Endothelial cell of umbilical vein (primary cell): ENCODE measurements at regions of chr7 and their contacts with region 1.

Region 1: GRCh38 chr7:4010061-4010605 is 672.0 kb upstream of the FOXK1 start:
- DNase-seq: no peak
- H3K4me3 ChIP-seq: no peak overlapping the region
- H3K27ac ChIP-seq: no peak overlapping the region
- H3K4me1 ChIP-seq: peaks cover 13% of the 10 kb centered on the region
- H3K27me3 ChIP-seq: no peaks in the 10 kb centered on the region
- CTCF ChIP-seq: no peak
- POLR2A ChIP-seq: no peak

Region 2: GRCh38 chr7:3942816-3943745 is 67.1 kb before region 1 on chr7:
- CTCF ChIA-PET with region 1: no interaction called
- POLR2A ChIA-PET with region 1: no interaction called
- dilution Hi-C with region 1: no loop called
- intact Hi-C with region 1: no loop called
- DNase-seq: no peak
- H3K4me3 ChIP-seq: no peak overlapping the region
- H3K27ac ChIP-seq: no peak overlapping the region
- H3K4me1 ChIP-seq: no peaks in the 10 kb centered on the region
- H3K27me3 ChIP-seq: no peaks in the 10 kb centered on the region
- CTCF ChIP-seq: no peak
- POLR2A ChIP-seq: no peak

Region 3: DNA sequence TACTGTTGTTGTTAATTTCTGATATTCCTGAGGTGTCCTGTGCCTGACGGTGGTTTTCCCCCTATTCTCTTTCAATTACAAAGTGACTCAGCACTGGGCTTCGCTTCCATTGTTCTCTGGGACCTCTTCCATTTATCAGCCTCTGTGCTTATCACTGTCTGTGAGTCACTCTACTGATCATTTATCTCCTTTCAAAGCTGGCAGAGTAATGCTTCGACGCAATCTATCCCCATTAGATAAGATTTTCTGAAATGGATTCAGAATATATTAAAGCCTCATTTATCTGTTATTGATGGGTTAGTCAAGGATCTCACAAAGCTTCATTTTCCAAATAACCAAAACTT is 29.9 kb before region 1 on chr7:
- CTCF ChIA-PET with region 1: no interaction called
- POLR2A ChIA-PET with region 1: interaction called, 11 read pairs
- dilution Hi-C with region 1: no loop called
- intact Hi-C with region 1: no loop called
- DNase-seq: peak; percentile 78
- H3K4me3 ChIP-seq: no peak overlapping the region
- H3K27ac ChIP-seq: peak overlapping the region; percentile 28
- H3K4me1 ChIP-seq: peaks cover 11% of the 10 kb centered on the region
- H3K27me3 ChIP-seq: no peaks in the 10 kb centered on the region
- CTCF ChIP-seq: no peak
- POLR2A ChIP-seq: no peak

Region 4: DNA sequence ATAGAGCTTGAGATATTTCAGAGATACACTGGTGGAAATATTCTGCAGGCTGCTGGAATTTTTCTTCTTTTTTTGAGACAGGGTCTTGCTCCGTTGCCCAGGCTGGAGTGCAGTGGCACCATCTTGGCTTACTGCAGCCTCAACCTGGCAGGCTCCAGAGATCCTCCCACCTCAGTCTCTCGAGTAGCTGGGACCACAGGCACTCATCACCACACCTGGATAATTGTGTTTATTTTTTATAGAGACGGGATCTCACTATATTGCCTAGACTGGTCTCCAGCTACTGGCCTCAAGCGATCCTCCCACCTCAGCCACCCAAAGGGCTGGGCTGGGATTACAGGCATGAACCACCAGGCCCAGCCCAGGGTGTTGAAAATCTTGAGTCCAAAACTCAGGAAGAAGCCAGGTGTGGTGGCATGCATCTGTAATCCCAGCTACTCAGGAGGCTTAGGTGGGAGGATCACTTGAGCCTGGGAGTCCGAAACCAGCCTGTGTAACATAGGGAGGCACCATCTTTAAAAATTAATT is 616.2 kb after region 1 on chr7:
- CTCF ChIA-PET with region 1: no interaction called
- POLR2A ChIA-PET with region 1: interaction called, 11 read pairs
- dilution Hi-C with region 1: no loop called
- intact Hi-C with region 1: no loop called
- DNase-seq: no peak
- H3K4me3 ChIP-seq: no peak overlapping the region
- H3K27ac ChIP-seq: no peak overlapping the region
- H3K4me1 ChIP-seq: peaks cover 5% of the 10 kb centered on the region
- H3K27me3 ChIP-seq: no peaks in the 10 kb centered on the region
- CTCF ChIP-seq: no peak
- POLR2A ChIP-seq: no peak